Heart right ventricle (tissue), 16 donors: ENCODE measurements at regions of chr22 and their contacts with region 1.

Region 1: GRCh38 chr22:46239261-46240048 is 10.6 kb downstream of the CDPF1 start:
- DNase-seq: no peak
- ATAC-seq: no peak
- H3K4me3 ChIP-seq: no peak overlapping the region
- H3K27ac ChIP-seq: peak overlapping the region in 7 of 10 donors; percentile 52 to 84 (median 79)
- H3K4me1 ChIP-seq: peaks cover 5 to 74% (median 32%) of the 10 kb centered on the region in 9 donors
- H3K27me3 ChIP-seq: no peaks in the 10 kb centered on the region
- CTCF ChIP-seq: no peak

Region 2: DNA sequence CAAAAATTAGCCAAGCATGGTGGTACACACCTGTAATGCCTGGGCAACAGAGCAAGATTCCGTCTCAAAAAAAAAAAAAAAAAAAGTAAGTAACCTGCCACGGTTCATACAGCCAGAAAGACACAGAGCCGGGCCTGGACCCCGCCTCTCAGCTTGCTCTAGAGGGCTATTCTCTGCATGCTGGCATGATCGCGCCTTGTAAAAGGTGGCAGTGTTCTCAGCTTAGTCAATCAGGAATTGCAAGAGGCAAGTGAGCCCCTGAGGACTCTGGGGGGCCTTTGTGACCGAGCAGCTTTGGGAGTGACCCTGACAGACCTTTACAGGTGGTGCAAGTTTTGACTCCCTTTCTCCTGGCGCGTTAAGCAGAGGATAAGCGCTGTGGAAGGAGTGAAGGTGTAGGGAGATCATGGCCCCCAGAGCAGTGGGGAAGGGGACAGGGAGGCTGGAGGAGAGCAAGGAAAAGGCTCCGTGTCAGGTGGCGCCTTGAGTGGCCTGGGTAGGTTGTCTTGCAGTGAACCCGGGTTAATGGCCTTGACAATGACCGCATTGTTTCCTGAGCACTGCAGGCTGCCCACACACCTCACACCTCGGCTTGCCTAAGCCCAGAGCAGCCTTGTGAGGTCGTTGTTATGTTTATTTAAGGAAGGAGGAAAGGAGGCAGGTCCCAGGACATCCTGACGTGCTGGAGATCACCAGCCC is 38.2 kb before region 1 on chr22:
- intact Hi-C with region 1: loop called in 1 of 10 experiments (anchors 5 kb)
- DNase-seq: no peak
- ATAC-seq: peak in 7 of 8 donors; percentile 29 to 66 (median 42)
- H3K4me3 ChIP-seq: no peak overlapping the region
- H3K27ac ChIP-seq: peak overlapping the region in 2 of 10 donors; percentile 5 to 56
- H3K4me1 ChIP-seq: peaks cover 2 to 23% (median 19%) of the 10 kb centered on the region in 9 donors
- H3K27me3 ChIP-seq: no peaks in the 10 kb centered on the region
- CTCF ChIP-seq: no peak

Region 3: GRCh38 chr22:46367707-46368191 is 128.3 kb after region 1 on chr22:
- intact Hi-C with region 1: no loop called
- DNase-seq: peak; percentile 50 to 78
- ATAC-seq: peak; percentile 33 to 76 (median 66)
- H3K4me3 ChIP-seq: no peak overlapping the region
- H3K27ac ChIP-seq: no peak overlapping the region
- H3K4me1 ChIP-seq: no peaks in the 10 kb centered on the region
- H3K27me3 ChIP-seq: peaks cover 0 to 20% (median 6%) of the 10 kb centered on the region in 7 donors
- CTCF ChIP-seq: peak; percentile 71 to 94 (median 86)